Mammary epithelial cell (primary cell): ENCODE measurements at regions of chr7 and their contacts with region 1.

Region 1: GRCh38 chr7:27160546-27161213 is 4.2 kb upstream of the HOXA7 start:
- DNase-seq: peak; percentile 69
- H3K4me3 ChIP-seq: peak overlapping the region; percentile 48 to 72 (median 56)
- H3K27ac ChIP-seq: peak overlapping the region; percentile 53
- H3K4me1 ChIP-seq: peaks cover 61% of the 10 kb centered on the region
- H3K27me3 ChIP-seq: peaks cover 8% of the 10 kb centered on the region
- CTCF ChIP-seq: peak; percentile 78 to 98

Region 2: DNA sequence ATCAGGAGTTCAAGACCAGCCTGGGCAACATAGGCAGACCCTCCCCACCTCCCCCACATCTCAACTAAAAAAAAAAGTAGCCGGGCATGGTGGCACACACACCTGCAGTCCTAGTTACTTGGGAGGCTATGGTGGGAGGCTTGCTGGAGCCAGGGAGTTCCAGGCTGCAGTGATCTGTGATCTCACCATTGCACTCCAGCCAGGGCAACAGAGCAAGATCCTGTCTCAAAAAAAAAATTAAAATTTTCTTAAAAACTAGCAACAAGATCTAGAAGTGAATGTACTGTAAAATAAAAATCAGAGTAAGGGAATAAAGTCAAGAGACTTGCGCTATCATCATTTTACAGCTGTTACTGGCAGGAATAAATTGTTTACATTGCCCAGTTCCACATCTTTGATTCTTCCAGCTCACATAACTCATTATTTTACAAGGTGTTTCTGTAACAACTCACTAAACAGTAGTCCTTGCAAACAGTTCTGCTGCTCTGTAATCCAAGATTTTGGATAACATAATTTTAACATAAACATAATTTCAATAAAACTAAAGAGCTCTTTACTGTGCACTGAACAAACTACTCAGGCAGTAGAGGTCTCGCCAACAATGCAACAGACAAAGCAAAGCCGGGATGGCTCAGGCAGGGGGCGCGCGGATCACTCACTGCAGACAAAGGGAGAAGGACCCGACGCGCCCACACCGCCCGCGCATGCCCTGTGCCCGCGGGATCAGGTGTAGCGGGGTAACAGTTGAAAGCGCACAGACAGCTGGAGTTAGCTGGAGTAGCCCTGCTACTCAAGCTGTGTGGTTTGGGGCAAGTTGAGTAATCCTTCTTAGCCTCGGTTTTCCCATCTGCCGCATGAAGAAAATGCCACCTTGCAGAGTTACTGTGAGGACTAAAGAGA is 1082.0 kb before region 1 on chr7:
- CTCF ChIA-PET with region 1: no interaction called
- dilution Hi-C with region 1: no loop called
- in situ Hi-C with region 1: loop called in 1 of 2 experiments (anchors 25 kb)
- intact Hi-C with region 1: no loop called
- DNase-seq: peak; percentile 60
- H3K4me3 ChIP-seq: no peak overlapping the region
- H3K27ac ChIP-seq: no peak overlapping the region
- H3K4me1 ChIP-seq: peaks cover 13% of the 10 kb centered on the region
- H3K27me3 ChIP-seq: no peaks in the 10 kb centered on the region
- CTCF ChIP-seq: peak; percentile 10 to 64

Region 3: GRCh38 chr7:26200444-26201246 is 960.0 kb before region 1 on chr7 and contains the start of gene HNRNPA2B1:
- CTCF ChIA-PET with region 1: interaction called, 5 read pairs
- dilution Hi-C with region 1: no loop called
- in situ Hi-C with region 1: no loop called
- intact Hi-C with region 1: loop called (anchors 5 kb)
- DNase-seq: peak; percentile 97
- H3K4me3 ChIP-seq: peak within 1 kb of the TSS; percentile 99 to 100 (median 100)
- H3K27ac ChIP-seq: peak within 1 kb of the TSS; percentile 93
- H3K4me1 ChIP-seq: peaks cover 28% of the 10 kb centered on the region
- H3K27me3 ChIP-seq: no peaks in the 10 kb centered on the region
- CTCF ChIP-seq: no peak
- total RNA-seq, gene HNRNPA2B1: 62.0 to 506 TPM

Region 4: DNA sequence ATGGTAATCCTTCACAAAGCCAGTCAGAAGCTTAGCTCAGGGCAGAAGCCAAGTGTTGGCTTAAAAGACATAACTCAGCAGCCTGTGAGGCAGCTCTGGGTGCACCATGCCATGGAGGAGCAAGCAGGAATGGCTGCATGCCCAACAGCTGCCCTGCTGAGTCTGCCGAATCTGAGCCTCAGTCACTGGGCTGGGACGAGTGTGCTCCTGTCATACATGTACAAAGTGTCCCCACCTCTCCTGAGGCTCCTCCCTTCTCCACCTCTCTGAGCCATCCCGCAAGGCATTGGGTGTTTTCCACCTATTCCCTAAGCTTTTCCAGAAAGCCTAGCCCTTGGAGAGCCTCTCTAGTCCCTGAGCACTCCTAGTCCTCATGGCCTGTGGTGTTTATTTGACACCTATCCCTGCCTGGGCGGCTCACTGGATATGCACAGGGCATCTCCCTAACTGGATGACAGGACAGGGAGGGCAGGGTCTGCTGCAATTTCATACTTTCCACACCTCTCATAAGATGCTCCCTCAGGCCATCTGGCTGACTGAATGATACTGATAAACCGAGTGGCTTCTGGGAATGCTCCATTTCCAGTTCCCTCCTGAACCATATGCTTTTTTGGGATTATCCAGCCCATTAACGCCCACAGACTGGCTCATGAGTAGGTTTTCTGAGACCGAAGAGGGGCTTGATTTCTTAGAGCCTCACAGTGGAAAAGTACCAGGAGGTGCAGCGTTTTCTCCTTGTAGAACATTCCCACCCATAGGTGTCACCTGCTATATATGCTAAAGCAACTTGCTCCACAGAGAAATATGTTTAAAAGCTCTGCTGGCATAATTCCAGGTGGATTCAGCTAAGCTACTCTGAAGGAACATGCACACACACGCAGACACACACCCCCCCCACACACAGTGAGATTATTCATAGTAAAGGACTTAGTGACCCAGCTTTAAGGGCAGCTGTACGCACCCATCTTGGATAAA is 669.7 kb before region 1 on chr7:
- CTCF ChIA-PET with region 1: no interaction called
- dilution Hi-C with region 1: no loop called
- in situ Hi-C with region 1: no loop called
- intact Hi-C with region 1: loop called (anchors 5 kb)
- DNase-seq: peak; percentile 91
- H3K4me3 ChIP-seq: no peak overlapping the region
- H3K27ac ChIP-seq: no peak overlapping the region
- H3K4me1 ChIP-seq: peaks cover 17% of the 10 kb centered on the region
- H3K27me3 ChIP-seq: no peaks in the 10 kb centered on the region
- CTCF ChIP-seq: peak in 1 of 2 donors; percentile 40

Region 5: GRCh38 chr7:26686448-26686981 is 474.2 kb before region 1 on chr7:
- CTCF ChIA-PET with region 1: interaction called, 3 read pairs
- dilution Hi-C with region 1: no loop called
- in situ Hi-C with region 1: no loop called
- intact Hi-C with region 1: loop called (anchors 1 kb)
- DNase-seq: peak; percentile 31
- H3K4me3 ChIP-seq: no peak overlapping the region
- H3K27ac ChIP-seq: peak overlapping the region; percentile 4
- H3K4me1 ChIP-seq: peaks cover 19% of the 10 kb centered on the region
- H3K27me3 ChIP-seq: no peaks in the 10 kb centered on the region
- CTCF ChIP-seq: peak; percentile 48 to 53